Naive thymus-derived CD4-positive, alpha-beta T cell (primary cell): ENCODE measurements at regions of chr2 and their contacts with region 1.

Region 1: GRCh38 chr2:219402665-219403515 is 15.2 kb upstream of the DNPEP start:
- DNase-seq: peak in 8 of 9 donors; percentile 37 to 70 (median 62)
- ATAC-seq: peak; percentile 89
- H3K4me3 ChIP-seq: no peak overlapping the region
- H3K4me3 Mint-ChIP-seq: no peak overlapping the region
- H3K27ac ChIP-seq: no peak overlapping the region
- H3K27ac Mint-ChIP-seq: no peak overlapping the region
- H3K4me1 ChIP-seq: peaks cover 0 to 3% of the 10 kb centered on the region in 2 donors
- H3K4me1 Mint-ChIP-seq: peaks cover 0 to 9% (median 5%) of the 10 kb centered on the region in 7 donors
- H3K27me3 ChIP-seq: no peaks in the 10 kb centered on the region
- H3K27me3 Mint-ChIP-seq: peaks cover 0 to 13% (median 7%) of the 10 kb centered on the region in 5 donors

Region 2: GRCh38 chr2:219430633-219431615 is 28.0 kb after region 1 on chr2:
- CTCF ChIA-PET with region 1: interaction called, 3 read pairs
- POLR2A ChIA-PET with region 1: no interaction called
- intact Hi-C with region 1: loop called in 1 of 2 experiments (anchors 1 kb)
- DNase-seq: no peak
- ATAC-seq: no peak
- H3K4me3 ChIP-seq: no peak overlapping the region
- H3K4me3 Mint-ChIP-seq: no peak overlapping the region
- H3K27ac ChIP-seq: no peak overlapping the region
- H3K27ac Mint-ChIP-seq: no peak overlapping the region
- H3K4me1 ChIP-seq: no peaks in the 10 kb centered on the region
- H3K4me1 Mint-ChIP-seq: peaks cover 0 to 8% (median 0%) of the 10 kb centered on the region in 7 donors
- H3K27me3 ChIP-seq: no peaks in the 10 kb centered on the region
- H3K27me3 Mint-ChIP-seq: peaks cover 7 to 33% (median 15%) of the 10 kb centered on the region in 5 donors

Region 3: DNA sequence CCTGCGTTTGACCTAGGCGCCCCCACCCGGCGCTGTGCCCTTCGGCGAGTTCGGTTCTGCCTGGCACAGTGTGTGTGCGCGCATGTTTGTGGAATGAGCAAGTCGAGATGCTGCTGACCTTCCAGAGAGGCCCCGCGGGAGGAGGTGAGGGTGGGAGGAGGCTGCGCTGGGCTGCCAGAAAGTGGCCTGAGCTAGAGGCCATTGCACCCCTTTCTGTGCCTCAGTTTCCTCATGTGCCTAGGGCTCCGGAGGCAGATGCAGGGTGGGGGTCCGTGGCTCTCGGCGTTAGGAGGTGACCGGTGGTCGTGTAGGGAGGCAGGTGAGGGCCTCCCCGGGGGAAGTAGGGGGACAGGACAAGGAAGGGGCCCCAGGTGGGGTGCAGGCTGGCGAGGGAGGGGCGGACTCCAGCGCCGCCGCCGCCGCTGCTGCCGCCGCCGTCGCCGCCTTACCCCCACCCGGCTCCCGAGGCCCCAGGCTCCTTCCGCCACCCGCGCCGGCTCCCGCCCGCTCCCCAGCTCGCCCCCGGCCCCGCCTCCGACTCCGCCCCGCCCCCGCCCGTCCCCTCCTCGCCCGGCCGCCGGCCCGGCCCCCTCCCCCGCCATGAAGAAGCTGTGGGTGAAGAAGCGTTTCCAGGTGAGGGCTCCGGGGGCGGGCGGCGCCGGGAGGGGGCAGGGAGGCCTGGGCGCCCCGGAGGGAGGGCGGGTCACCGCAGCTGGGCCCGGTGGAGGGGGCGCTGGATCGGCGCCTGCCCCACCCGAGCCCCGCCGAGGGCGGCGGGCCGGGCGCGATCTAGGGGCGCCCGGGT is 38.8 kb after region 1 on chr2:
- CTCF ChIA-PET with region 1: no interaction called
- POLR2A ChIA-PET with region 1: no interaction called
- intact Hi-C with region 1: loop called in 1 of 2 experiments (anchors 5 kb)
- DNase-seq: peak; percentile 23 to 54 (median 49)
- ATAC-seq: peak; percentile 77
- H3K4me3 ChIP-seq: peak overlapping the region; percentile 44
- H3K4me3 Mint-ChIP-seq: peak overlapping the region; percentile 77 to 92 (median 85)
- H3K27ac ChIP-seq: peak overlapping the region; percentile 14
- H3K27ac Mint-ChIP-seq: peak overlapping the region in 5 of 9 donors; percentile 1 to 83 (median 67)
- H3K4me1 ChIP-seq: peaks cover 2 to 9% of the 10 kb centered on the region in 2 donors
- H3K4me1 Mint-ChIP-seq: peaks cover 7 to 15% (median 13%) of the 10 kb centered on the region in 7 donors
- H3K27me3 ChIP-seq: peaks cover 0 to 2% of the 10 kb centered on the region in 2 donors
- H3K27me3 Mint-ChIP-seq: peaks cover 0 to 55% (median 0%) of the 10 kb centered on the region in 5 donors

Region 4: GRCh38 chr2:219459460-219460311 is 56.8 kb after region 1 on chr2:
- CTCF ChIA-PET with region 1: interaction called, 5 read pairs
- POLR2A ChIA-PET with region 1: no interaction called
- intact Hi-C with region 1: loop called (anchors 1 kb)
- DNase-seq: peak in 3 of 9 donors; percentile 17 to 49 (median 36)
- ATAC-seq: peak; percentile 43
- H3K4me3 ChIP-seq: no peak overlapping the region
- H3K4me3 Mint-ChIP-seq: no peak overlapping the region
- H3K27ac ChIP-seq: no peak overlapping the region
- H3K27ac Mint-ChIP-seq: peak overlapping the region in 1 of 9 donors; percentile 21
- H3K4me1 ChIP-seq: no peaks in the 10 kb centered on the region
- H3K4me1 Mint-ChIP-seq: peaks cover 0 to 9% (median 2%) of the 10 kb centered on the region in 7 donors
- H3K27me3 ChIP-seq: no peaks in the 10 kb centered on the region
- H3K27me3 Mint-ChIP-seq: no peaks in the 10 kb centered on the region

Region 5: DNA sequence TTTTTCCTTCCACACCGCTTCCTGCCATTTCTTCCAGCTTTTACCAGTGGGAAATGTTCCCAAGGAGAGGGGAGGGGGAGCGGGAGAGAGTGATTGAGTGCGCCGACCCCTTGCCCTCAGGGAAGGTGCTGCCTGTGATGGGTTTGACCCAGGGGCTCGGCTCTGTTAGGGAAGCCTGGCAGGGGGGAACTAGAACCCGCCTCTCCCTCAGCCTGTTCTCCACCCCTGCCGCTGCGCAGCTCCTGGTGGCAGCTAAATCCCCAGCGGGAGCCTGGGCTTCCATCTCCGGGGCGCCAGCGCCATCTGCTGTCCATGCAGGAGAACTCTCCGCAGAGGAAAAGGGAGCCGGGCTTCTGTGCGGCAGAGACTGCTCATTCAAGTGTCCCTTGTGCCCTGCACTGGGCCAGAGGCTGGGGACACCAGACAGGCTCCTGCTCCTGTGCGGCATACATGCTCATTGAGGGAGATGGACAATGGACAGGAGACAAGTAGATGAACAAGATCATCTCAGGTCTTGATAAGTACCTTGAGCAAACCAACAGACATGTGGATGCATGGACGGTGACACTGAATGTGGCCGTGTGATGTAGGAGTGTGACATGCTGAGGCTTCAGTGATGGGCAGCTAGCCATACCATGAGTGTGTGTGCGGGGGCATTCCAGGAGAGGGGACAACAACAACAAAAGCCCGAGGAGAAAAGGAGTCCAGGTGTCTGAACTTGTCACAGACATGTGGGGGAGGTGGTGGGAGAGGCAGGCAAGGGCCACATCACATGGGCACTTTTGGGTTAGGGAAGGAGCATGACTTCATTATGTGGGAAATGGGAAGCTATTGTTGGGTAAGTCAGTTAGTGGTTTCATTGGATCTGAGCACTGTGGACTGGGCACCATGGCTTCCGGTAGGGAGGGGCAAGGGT is 127.4 kb after region 1 on chr2:
- CTCF ChIA-PET with region 1: interaction called, 67 read pairs
- POLR2A ChIA-PET with region 1: interaction called, 5 read pairs
- intact Hi-C with region 1: loop called (anchors 1 kb)
- DNase-seq: peak; percentile 70 to 89 (median 83)
- ATAC-seq: peak; percentile 91
- H3K4me3 ChIP-seq: no peak overlapping the region
- H3K4me3 Mint-ChIP-seq: no peak overlapping the region
- H3K27ac ChIP-seq: no peak overlapping the region
- H3K27ac Mint-ChIP-seq: no peak overlapping the region
- H3K4me1 ChIP-seq: peaks cover 0 to 8% of the 10 kb centered on the region in 2 donors
- H3K4me1 Mint-ChIP-seq: peaks cover 0 to 7% (median 0%) of the 10 kb centered on the region in 7 donors
- H3K27me3 ChIP-seq: peaks cover 3 to 20% of the 10 kb centered on the region in 2 donors
- H3K27me3 Mint-ChIP-seq: peaks cover 53 to 65% (median 57%) of the 10 kb centered on the region in 5 donors

Region 6: GRCh38 chr2:219560037-219560892 is 157.4 kb after region 1 on chr2:
- CTCF ChIA-PET with region 1: no interaction called
- POLR2A ChIA-PET with region 1: no interaction called
- intact Hi-C with region 1: loop called in 1 of 2 experiments (anchors 1 kb)
- DNase-seq: peak in 2 of 9 donors; percentile 33 to 41
- ATAC-seq: peak; percentile 67
- H3K4me3 ChIP-seq: no peak overlapping the region
- H3K4me3 Mint-ChIP-seq: no peak overlapping the region
- H3K27ac ChIP-seq: no peak overlapping the region
- H3K27ac Mint-ChIP-seq: no peak overlapping the region
- H3K4me1 ChIP-seq: no peaks in the 10 kb centered on the region
- H3K4me1 Mint-ChIP-seq: no peaks in the 10 kb centered on the region
- H3K27me3 ChIP-seq: no peaks in the 10 kb centered on the region
- H3K27me3 Mint-ChIP-seq: peaks cover 2 to 41% (median 16%) of the 10 kb centered on the region in 5 donors

Region 7: DNA sequence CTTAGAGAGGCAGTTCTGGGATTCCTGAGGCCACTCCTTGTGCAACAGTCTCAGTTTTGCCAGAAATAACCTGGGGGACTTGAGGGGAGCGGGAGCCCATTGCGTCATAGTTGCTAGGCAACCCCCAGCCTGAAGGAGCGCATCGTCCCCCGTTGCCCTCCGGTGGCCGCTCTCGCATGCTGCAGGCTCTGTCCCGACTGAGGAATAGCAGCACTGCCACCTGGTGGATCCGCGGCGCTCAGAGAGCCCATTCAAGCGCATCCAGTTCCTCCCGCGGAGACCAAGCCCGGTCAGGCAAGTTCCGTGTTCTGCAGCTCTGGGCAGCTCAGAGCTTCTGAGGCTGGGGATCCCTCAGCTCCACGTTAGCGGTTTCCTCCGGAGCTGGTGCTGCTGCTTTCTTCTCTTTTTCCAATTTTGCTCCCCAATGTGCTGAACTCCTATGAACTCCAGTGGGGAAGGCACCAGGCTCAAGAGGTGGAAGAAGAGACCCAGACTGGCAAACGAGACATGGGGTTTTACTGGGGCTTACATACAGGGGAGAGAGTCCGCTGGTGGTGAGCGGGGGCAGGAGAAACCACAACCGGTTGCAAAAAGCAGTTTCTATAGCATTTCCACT is 239.7 kb after region 1 on chr2:
- CTCF ChIA-PET with region 1: no interaction called
- POLR2A ChIA-PET with region 1: no interaction called
- intact Hi-C with region 1: loop called in 1 of 2 experiments (anchors 1 kb)
- DNase-seq: peak; percentile 73 to 88 (median 83)
- ATAC-seq: peak; percentile 99
- H3K4me3 ChIP-seq: no peak overlapping the region
- H3K4me3 Mint-ChIP-seq: peak overlapping the region in 1 of 10 donors; percentile 29
- H3K27ac ChIP-seq: no peak overlapping the region
- H3K27ac Mint-ChIP-seq: peak overlapping the region in 3 of 9 donors; percentile 16 to 69 (median 20)
- H3K4me1 ChIP-seq: peaks cover 3 to 4% of the 10 kb centered on the region in 2 donors
- H3K4me1 Mint-ChIP-seq: peaks cover 0 to 15% (median 0%) of the 10 kb centered on the region in 7 donors
- H3K27me3 ChIP-seq: no peaks in the 10 kb centered on the region
- H3K27me3 Mint-ChIP-seq: peaks cover 3 to 29% (median 12%) of the 10 kb centered on the region in 5 donors